Activated B cell treated with CpG ODN at 0.5 μM for 24 hours (primary cell): ENCODE measurements at regions of chr5 and their contacts with region 1.

Region 1: GRCh38 chr5:173887610-173888472 is at the start of gene CPEB4:
- DNase-seq: peak; percentile 87
- ATAC-seq: peak; percentile 91
- H3K4me3 Mint-ChIP-seq: peak within 1 kb of the TSS; percentile 100
- H3K27ac Mint-ChIP-seq: peak within 1 kb of the TSS; percentile 100
- H3K4me1 Mint-ChIP-seq: peaks cover 87% of the 10 kb centered on the region
- H3K27me3 Mint-ChIP-seq: no peaks in the 10 kb centered on the region
- CTCF ChIP-seq: no peak
- total RNA-seq, gene CPEB4: 26.9 and 30.0 TPM in 2 replicates

Region 2: DNA sequence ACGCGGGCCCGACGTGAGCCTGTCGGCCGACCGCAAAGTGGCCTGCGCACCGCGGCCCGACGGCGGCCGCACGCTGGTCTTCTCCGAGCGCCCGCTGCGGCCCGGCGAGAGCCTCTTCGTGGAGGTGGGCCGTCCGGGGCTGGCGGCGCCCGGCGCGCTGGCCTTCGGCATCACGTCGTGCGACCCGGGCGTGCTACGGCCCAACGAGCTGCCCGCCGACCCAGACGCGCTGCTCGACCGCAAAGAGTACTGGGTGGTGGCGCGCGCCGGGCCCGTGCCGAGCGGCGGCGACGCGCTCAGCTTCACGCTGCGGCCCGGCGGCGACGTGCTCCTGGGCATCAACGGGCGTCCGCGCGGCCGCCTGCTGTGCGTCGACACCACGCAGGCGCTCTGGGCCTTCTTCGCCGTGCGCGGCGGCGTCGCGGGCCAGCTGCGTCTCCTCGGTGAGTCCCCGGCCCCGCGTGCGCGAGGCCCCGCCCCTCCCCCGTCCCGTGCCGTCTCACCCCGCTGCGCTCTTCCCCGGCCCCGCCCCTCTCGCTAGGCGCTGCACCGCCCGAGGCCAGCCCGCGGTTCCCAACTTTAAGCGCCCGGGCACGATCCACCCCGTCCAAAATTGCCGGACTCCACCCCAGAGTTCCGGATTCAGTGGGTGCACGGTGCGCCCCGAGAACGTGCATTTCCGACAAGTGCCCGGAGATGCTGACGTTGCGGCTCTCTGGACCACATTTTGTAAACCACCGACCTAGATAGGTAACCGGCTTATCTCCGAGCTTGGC is 1204.0 kb before region 1 on chr5:
- CTCF ChIA-PET with region 1: no interaction called
- POLR2A ChIA-PET with region 1: no interaction called
- intact Hi-C with region 1: loop called (anchors 5 kb)
- DNase-seq: peak; percentile 52
- ATAC-seq: peak; percentile 89
- H3K4me3 Mint-ChIP-seq: peak overlapping the region; percentile 77
- H3K27ac Mint-ChIP-seq: peak overlapping the region; percentile 76
- H3K4me1 Mint-ChIP-seq: peaks cover 22% of the 10 kb centered on the region
- H3K27me3 Mint-ChIP-seq: peaks cover 2% of the 10 kb centered on the region
- CTCF ChIP-seq: no peak

Region 3: DNA sequence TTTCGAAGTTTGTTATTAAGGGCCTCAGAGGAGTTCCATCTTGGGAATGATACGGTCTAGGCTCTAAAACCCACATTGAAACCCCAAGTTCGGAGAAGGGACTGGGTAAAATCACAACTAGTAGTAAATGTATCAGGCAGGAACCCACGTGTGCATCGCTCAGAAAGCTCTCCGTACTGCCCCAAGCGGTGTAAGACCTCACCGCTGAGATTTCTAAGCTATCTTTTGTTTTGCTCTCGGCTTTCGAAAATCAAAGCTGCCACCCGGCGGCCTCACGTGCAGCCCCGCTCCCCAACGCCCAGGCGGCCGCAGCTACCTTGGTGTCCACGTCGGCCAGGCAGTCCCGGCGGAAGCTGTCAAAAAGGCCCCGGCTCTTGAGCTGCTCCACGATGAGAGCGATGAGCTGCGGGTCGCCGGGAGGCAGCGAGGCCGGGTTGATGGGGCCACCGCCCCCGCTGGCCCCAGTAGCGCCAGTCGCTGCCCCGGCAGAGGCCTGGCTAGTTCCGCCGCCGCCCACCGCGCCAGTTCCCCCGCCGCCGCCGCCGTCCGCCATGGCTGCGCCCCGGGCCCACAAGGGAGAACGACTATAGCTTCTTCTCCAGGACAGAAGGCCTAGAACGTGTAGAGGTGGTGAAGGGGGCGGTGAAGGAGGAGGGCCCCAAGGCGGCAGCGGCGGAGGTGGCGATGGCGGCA is 271.8 kb before region 1 on chr5:
- CTCF ChIA-PET with region 1: interaction called, 28 read pairs
- POLR2A ChIA-PET with region 1: interaction called, 15 read pairs
- intact Hi-C with region 1: loop called (anchors 1 kb)
- DNase-seq: peak; percentile 63
- ATAC-seq: peak; percentile 47
- H3K4me3 Mint-ChIP-seq: peak overlapping the region; percentile 92
- H3K27ac Mint-ChIP-seq: peak overlapping the region; percentile 88
- H3K4me1 Mint-ChIP-seq: peaks cover 41% of the 10 kb centered on the region
- H3K27me3 Mint-ChIP-seq: no peaks in the 10 kb centered on the region
- CTCF ChIP-seq: no peak

Region 4: GRCh38 chr5:173745123-173745522 is 142.7 kb before region 1 on chr5:
- CTCF ChIA-PET with region 1: no interaction called
- POLR2A ChIA-PET with region 1: interaction called, 6 read pairs
- intact Hi-C with region 1: loop called (anchors 2 kb)
- DNase-seq: peak; percentile 33
- ATAC-seq: peak; percentile 70
- H3K4me3 Mint-ChIP-seq: peak overlapping the region; percentile 29
- H3K27ac Mint-ChIP-seq: peak overlapping the region; percentile 80
- H3K4me1 Mint-ChIP-seq: peaks cover 60% of the 10 kb centered on the region
- H3K27me3 Mint-ChIP-seq: no peaks in the 10 kb centered on the region
- CTCF ChIP-seq: no peak

Region 5: DNA sequence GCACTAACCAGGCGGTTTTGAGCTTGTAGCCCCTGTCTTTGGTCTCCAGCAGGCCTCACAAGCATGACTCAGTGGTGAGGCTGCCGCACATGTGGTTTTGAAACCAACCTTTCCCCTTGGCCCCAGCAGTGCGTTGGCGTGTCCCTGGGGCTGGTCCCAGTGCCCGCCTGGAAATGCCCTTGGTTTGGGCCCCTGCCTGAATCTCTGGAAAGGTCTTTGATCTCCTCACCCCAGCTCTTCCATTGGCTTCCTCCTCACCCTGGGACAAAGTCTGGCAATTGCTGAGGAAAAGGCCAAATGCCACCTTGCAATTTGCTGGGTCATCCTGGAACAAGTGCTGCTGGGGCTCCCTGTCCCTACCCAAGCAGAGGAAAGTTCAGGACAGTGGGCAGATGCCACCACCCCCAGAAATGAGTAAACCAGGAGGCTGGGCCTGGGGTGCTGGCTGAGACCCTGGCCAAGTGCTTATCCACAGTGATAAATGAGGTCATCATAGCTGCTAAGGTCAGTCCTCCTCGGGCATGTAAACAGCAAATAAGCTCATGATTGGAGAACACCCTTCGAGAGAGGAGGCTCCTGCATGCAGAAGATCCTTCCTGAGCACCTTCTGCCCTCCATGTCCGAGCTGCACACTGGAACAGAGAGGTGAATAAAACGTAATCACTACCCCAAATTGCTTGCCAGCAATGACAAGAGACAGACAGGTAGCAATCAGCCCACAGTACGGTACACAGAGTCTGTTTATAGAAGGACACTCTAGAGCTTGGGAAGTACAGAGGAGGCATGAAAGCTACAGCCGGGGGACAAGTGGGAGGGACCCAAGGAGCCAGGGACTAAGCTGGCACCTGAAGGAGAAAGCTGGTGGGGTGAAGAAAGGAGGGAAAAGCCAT is 98.6 kb before region 1 on chr5:
- CTCF ChIA-PET with region 1: interaction called, 18 read pairs
- POLR2A ChIA-PET with region 1: interaction called, 17 read pairs
- intact Hi-C with region 1: loop called (anchors 1 kb)
- DNase-seq: no peak
- ATAC-seq: no peak
- H3K4me3 Mint-ChIP-seq: no peak overlapping the region
- H3K27ac Mint-ChIP-seq: no peak overlapping the region
- H3K4me1 Mint-ChIP-seq: peaks cover 34% of the 10 kb centered on the region
- H3K27me3 Mint-ChIP-seq: no peaks in the 10 kb centered on the region
- CTCF ChIP-seq: no peak

Region 6: DNA sequence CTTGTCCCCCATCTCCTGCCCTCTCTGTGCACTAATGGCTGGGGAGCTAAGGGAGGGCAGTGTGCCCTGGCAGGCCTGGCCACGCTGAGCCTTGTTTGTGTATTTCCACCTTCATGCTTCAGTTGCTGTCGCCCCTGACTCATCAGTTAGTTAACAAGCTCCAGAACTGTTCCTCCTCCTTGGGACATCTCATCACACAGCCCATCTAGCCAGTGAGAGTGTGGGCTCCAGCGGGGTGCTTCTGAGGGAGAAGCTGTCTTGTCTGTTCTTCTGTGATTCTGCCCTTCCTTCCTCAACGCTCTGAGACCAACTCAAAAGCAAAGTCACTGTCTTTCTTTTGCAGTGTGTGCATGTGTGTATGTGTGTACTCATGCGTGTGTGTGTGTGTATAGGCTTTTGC is 58.0 kb before region 1 on chr5:
- CTCF ChIA-PET with region 1: interaction called, 3 read pairs
- POLR2A ChIA-PET with region 1: interaction called, 22 read pairs
- intact Hi-C with region 1: loop called (anchors 2 kb)
- DNase-seq: no peak
- ATAC-seq: peak; percentile 47
- H3K4me3 Mint-ChIP-seq: no peak overlapping the region
- H3K27ac Mint-ChIP-seq: peak overlapping the region; percentile 43
- H3K4me1 Mint-ChIP-seq: peaks cover 84% of the 10 kb centered on the region
- H3K27me3 Mint-ChIP-seq: no peaks in the 10 kb centered on the region
- CTCF ChIP-seq: no peak

Region 7: DNA sequence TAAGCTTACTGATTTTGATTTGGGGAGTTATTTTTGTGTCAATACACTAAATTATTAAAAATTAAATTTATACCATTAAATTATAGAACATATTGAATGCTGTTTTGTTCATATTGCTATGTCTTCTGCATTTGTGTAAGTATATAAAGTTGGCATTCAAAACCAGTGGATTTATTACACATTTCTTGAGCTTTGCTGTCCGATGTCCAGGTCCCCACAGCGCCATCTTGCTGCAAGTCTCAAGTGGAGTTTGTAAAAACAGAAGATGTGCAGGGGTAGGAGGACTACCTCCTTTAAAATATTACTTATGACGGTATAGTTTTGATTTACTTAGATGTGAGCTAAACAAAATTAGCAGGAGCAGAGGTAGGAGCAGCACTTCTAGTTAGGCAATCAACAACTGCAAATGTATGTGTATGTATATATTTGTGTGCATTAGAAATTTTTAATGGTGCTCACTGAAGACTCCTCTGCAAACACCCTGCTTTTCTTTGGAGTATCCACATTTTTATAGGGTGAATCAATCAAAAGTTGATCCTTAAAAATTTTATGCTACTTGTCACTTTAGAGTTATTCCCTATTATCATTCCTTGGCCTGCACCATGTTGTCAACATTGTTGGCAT is 37.7 kb after region 1 on chr5:
- CTCF ChIA-PET with region 1: interaction called, 18 read pairs
- POLR2A ChIA-PET with region 1: interaction called, 3 read pairs
- intact Hi-C with region 1: no loop called
- DNase-seq: no peak
- ATAC-seq: peak; percentile 54
- H3K4me3 Mint-ChIP-seq: no peak overlapping the region
- H3K27ac Mint-ChIP-seq: no peak overlapping the region
- H3K4me1 Mint-ChIP-seq: peaks cover 25% of the 10 kb centered on the region
- H3K27me3 Mint-ChIP-seq: no peaks in the 10 kb centered on the region
- CTCF ChIP-seq: no peak